GM18951 (cell line): ENCODE measurements at regions of chr14 and their contacts with region 1.

Region 1: DNA sequence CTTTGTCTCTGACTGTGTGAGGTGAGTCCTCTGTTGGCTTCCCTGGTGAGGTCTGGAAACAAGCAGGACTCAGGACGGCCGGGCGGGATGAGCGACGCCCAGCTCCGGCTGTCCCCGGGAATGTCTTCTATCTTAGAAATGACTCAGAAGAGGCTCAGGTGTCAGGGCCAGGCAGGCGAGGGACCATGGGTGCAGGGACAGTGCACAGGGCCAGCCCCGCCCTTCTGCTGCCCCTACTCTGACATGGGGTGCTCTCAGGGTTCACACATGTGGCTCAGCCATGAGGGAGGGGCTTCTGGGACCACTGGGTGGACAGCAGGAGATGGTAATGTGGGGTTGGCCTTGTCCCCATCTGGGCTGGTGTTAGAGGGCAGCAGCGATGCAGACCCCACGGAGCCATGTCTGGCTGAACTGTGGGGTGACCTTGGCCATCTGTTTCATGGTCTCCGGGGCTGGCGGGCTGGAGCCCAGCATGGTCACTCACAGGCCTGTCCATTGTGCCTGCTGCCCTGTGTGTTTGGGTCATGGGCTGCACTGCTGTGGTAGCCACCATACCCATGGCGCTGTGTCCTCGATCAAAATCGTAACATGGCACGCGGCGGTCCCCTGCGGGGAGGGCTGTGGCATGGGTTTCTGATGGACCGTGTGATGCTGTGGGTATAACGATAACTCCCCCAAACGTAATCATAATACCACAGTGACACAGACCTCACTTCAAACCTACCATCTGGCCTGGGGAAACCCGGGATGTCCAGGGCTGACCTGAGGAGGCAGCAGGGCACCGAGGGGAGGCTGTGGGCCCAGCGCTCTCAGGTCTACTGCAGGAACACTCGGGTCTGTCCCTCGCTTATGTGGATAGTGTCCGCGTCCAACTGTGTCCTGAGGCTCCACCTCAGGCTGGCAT is 368.8 kb downstream of the TMEM121 start:
- POLR2A ChIP-seq: no peak

Region 2: DNA sequence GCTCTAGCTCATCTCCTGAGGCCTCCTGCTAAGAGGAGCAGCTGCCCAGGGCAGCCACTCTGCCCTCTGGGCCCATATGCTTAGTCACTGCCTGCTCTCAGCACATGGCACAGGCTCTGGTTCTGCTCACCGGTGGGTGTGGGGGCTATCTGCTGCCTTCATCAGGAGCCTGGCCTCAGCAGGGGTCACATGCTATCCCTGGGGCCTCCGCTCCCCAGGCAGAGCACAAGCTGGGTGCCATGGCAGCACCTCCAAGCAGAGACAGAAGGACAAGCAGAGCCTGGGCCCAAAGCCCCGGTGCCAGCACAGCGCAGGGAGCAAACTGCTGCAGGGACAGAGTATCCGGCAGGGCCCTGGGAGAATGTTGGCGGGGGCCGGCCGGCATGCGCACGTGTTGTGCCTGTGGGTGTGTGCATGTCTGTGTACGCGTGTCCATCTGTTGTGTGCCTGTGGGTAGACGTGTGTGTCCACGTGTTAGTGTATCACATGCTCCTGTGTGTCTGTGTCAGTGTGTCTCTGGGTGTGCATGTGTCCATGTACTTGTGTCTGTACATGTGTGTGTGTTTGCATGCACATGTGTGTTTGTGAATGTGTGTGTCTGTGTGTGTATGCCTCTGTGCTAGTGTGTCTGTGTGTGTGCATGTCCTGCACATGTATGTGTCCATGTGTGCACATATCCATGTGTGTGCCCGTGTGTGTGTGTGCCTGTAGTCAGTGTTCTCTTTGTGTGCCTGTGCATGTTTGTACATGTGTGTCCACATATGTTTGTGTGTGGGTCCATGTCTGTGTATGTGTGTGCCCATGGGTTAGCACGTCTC is 41.9 kb before region 1 on chr14:
- in situ Hi-C with region 1: loop called (anchors 5 kb)
- POLR2A ChIP-seq: peak; percentile 89